ENCODE measurements at regions of chr7 and their contacts with region 1.

Region 1: DNA sequence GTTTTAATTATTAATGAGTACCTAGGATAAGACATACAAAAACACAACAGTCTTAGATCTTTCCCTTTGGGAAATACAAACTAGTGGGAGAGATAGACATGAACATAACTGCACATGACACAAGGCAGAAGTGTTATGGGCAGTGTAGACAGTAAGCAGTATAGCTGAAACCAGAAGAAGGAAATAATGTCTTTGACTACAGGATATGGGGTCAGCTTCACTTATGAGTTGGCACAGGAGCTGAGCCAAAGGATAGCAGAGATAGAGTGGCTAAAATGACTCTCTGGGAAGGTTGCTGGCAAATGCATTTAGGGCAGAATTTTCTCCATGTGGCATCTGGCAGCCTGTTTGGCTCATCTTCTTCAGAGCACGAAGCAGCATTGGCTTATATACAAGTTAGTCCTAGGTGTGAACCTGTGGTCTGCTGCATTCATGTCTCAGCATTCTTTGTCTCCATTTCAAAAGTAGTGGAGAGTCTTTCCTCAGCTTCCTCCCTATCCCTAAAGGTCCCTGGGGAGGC is 60.3 kb upstream of the FEZF1 start:
- DNase-seq: no peak
- CTCF ChIP-seq: no peak

Region 2: GRCh38 chr7:122329145-122329802 is 35.5 kb before region 1 on chr7:
- CTCF ChIA-PET with region 1: no interaction called
- POLR2A ChIA-PET with region 1: no interaction called
- DNase-seq: no peak
- CTCF ChIP-seq: no peak

Region 3: DNA sequence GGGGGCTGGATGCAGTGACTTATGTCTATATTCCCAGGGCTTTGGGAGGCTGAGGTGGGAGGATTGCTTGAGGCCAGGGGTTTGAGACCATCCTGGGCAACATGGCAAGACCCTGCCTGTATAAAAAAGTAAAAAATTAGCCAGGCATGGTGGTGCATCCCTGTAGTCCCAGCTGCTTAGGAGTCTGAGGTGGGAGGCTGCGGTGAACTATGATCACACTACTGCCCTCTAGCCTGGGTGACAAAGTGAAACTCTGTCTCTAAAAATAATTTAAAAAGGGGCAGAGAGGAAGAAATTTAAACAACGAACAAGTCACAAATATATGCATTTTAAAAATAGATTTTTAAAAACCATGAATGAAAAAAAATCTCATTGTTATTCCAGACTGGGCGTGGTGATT is 14.1 kb before region 1 on chr7:
- CTCF ChIA-PET with region 1: interaction called, 13 read pairs
- POLR2A ChIA-PET with region 1: no interaction called
- DNase-seq: no peak
- CTCF ChIP-seq: no peak

Measured in GM10248 (cell line).